Left cardiac atrium (tissue), 4 donors: ENCODE measurements at regions of chr5 and their contacts with region 1.

Region 1: GRCh38 chr5:156824800-156825199 is 25.3 kb upstream of the PPP1R2B start:
- DNase-seq: no peak
- ATAC-seq: peak; percentile 58 to 76

Region 2: GRCh38 chr5:155936520-155937406 is 888.0 kb before region 1 on chr5:
- intact Hi-C with region 1: loop called in 1 of 2 experiments (anchors 10 kb)
- DNase-seq: no peak
- ATAC-seq: peak in 1 of 2 donors; percentile 50

Region 3: DNA sequence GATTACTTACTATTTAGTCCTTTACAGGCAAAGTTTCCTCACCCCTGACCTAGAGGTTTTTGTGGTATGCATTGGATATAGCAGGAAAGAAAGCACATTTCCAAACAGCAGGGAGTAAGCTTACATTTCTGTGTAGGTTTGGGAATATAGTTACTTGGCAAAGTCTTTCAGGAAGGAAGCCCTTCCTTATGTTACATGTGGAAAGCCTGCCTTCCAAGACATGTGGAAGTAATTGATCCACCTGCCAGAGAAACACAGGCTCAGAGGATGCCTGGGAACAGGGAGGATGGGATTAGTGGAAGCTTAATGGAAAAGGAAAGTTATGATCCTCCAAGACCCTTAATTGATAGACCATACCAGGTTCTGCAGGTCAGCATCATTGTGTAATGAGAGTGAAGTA is 62.0 kb before region 1 on chr5:
- intact Hi-C with region 1: no loop called
- DNase-seq: no peak
- ATAC-seq: no peak